Ascending aorta (tissue), 2 donors: ENCODE measurements at regions of chr18 and their contacts with region 1.

Region 1: GRCh38 chr18:9708057-9708433 is at the start of gene RAB31:
- DNase-seq: peak; percentile 70 to 92
- H3K4me3 ChIP-seq: peak within 1 kb of the TSS; percentile 78 to 81
- H3K27ac ChIP-seq: peak within 1 kb of the TSS; percentile 89 to 99
- H3K4me1 ChIP-seq: peaks cover 0 to 33% of the 10 kb centered on the region in 2 donors
- H3K27me3 ChIP-seq: no peaks in the 10 kb centered on the region
- CTCF ChIP-seq: no peak
- total RNA-seq, gene RAB31: 36.8 TPM

Region 2: GRCh38 chr18:9683407-9684396 is 24.3 kb before region 1 on chr18:
- intact Hi-C with region 1: loop called (anchors 2 kb)
- DNase-seq: peak in 1 of 2 donors; percentile 67
- H3K4me3 ChIP-seq: peak overlapping the region; percentile 16 to 45
- H3K27ac ChIP-seq: peak overlapping the region; percentile 79 to 86
- H3K4me1 ChIP-seq: peaks cover 9 to 18% of the 10 kb centered on the region in 2 donors
- H3K27me3 ChIP-seq: no peaks in the 10 kb centered on the region
- CTCF ChIP-seq: peak; percentile 25 to 57 (median 28)

Region 3: DNA sequence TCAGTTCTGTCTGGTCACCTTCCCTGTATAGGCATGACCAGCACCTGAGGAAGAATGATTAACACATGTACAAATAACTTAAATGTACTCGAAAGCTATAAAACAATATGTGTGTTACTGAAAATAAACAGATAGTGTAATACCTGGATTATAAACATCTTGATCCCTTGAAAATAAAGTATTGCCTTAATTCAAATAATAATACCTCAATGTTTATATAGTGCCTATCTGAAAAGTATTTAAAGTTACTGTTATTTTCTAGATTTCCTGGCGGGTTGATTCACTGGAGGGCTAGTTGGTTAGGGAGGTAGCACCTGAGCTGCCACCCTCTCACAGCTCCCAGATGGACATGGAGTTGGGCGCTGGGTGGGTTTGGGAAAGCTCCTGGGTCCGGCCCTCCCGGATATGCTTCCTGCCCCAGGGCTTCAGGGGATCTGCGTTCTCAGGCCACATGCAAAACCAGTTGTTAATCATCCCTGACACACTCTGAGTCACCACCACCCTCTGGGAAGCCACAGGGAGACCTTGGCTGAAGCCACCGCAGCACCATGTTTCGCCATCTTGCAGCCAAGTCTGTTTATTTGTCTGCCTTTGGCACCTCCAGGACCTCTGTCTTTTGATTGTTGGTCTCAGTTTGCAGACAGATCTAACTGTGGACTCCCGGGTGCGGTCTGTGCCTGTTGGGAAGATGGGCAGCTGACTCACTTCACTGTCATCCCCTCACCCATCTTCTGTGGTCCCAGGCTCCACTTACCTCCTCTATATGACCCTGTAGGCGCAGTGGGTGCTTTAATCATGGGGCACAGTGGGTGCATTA is 35.4 kb after region 1 on chr18:
- intact Hi-C with region 1: loop called (anchors 2 kb)
- DNase-seq: peak in 1 of 2 donors; percentile 79
- H3K4me3 ChIP-seq: peak overlapping the region in 1 of 2 donors; percentile 39
- H3K27ac ChIP-seq: peak overlapping the region; percentile 45 to 63
- H3K4me1 ChIP-seq: peaks cover 13 to 19% of the 10 kb centered on the region in 2 donors
- H3K27me3 ChIP-seq: no peaks in the 10 kb centered on the region
- CTCF ChIP-seq: no peak

Region 4: DNA sequence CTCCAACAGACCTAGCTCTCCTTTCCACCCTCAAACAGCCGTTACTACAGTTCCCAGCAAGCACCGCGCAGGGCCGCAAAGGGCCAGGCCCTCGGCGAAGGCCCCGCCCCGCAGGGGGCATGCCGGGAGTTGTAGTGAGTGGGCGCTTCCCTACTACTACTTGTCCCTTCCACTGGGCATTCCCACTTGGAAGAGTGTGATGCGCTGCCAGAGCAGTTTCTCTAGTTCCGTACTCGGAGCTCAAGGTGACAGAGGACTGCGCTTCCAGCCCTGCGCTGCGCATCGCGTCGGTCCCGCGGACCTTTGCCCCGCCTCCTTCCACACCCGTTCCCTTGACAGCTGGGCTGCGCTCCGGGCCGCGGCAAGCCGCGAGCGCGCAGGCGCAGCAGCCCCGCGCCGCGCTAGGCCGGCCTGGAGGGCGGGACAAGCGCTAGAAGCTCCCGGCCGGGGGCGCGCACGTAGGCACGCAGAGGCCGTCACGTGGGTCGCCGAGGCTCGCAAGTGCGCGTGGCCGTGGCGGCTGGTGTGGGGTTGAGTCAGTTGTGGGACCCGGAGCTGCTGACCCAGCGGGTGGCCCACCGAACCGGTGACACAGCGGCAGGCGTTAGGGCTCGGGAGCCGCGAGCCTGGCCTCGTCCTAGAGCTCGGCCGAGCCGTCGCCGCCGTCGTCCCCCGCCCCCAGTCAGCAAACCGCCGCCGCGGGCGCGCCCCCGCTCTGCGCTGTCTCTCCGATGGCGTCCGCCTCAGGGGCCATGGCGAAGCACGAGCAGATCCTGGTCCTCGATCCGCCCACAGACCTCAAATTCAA is 205.7 kb after region 1 on chr18 and contains the start of gene VAPA:
- intact Hi-C with region 1: loop called (anchors 2 kb)
- DNase-seq: peak; percentile 85 to 97
- H3K4me3 ChIP-seq: peak within 1 kb of the TSS; percentile 96 to 97
- H3K27ac ChIP-seq: peak within 1 kb of the TSS; percentile 99 to 100
- H3K4me1 ChIP-seq: peaks cover 3 to 21% of the 10 kb centered on the region in 2 donors
- H3K27me3 ChIP-seq: no peaks in the 10 kb centered on the region
- CTCF ChIP-seq: no peak
- total RNA-seq, gene VAPA: 109 TPM

Region 5: DNA sequence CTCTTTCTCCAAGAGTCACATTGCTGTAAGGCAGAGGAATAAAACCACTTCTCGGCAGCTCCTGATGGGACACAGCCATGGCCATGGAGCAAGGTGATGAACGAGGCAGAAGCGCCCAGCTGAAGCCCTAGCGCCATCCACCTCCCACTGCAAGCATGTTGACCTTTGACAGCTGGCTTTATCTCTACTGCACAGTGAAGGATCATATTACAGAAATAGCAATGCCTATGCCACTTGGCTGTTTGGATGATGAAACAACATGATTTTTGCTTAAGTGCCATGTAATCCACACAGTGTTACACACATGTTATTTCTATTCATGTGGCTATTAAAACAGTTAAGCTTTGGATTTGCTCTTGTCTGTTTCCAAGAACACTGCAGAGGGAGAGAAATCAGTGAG is 373.4 kb after region 1 on chr18:
- intact Hi-C with region 1: no loop called
- DNase-seq: no peak
- H3K4me3 ChIP-seq: no peak overlapping the region
- H3K27ac ChIP-seq: no peak overlapping the region
- H3K4me1 ChIP-seq: no peaks in the 10 kb centered on the region
- H3K27me3 ChIP-seq: no peaks in the 10 kb centered on the region
- CTCF ChIP-seq: no peak